Posterior vena cava (tissue), 2 donors: ENCODE measurements at regions of chr15 and their contacts with region 1.

Region 1: GRCh38 chr15:72252663-72253299 is 19.6 kb downstream of the PARP6 start:
- DNase-seq: no peak

Region 2: DNA sequence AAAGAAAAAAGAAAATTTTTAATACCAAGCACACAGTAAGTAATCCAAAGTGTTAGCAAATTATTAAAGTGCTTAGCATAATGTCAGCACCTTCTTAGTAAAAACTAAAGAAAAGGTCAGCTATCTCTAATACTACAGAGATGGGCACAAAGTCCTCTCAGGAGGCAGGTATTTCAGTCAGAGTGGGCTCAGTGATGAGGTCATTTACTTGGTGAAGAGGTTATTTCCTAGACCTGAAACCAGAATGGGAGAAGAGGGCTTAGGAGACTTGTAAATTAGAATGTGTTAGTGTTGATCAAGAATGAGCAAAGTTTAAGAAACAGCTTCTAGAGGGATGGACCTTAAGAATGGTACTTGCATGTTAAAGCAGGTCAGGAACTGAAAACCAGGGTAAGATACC is 13.1 kb before region 1 on chr15:
- intact Hi-C with region 1: loop called in 1 of 2 experiments (anchors 1 kb)
- DNase-seq: no peak

Region 3: GRCh38 chr15:72445426-72445825 is 192.6 kb after region 1 on chr15:
- intact Hi-C with region 1: no loop called
- DNase-seq: no peak

Region 4: GRCh38 chr15:72958634-72959033 is 705.9 kb after region 1 on chr15:
- intact Hi-C with region 1: loop called in 1 of 2 experiments (anchors 5 kb)
- DNase-seq: no peak

Region 5: DNA sequence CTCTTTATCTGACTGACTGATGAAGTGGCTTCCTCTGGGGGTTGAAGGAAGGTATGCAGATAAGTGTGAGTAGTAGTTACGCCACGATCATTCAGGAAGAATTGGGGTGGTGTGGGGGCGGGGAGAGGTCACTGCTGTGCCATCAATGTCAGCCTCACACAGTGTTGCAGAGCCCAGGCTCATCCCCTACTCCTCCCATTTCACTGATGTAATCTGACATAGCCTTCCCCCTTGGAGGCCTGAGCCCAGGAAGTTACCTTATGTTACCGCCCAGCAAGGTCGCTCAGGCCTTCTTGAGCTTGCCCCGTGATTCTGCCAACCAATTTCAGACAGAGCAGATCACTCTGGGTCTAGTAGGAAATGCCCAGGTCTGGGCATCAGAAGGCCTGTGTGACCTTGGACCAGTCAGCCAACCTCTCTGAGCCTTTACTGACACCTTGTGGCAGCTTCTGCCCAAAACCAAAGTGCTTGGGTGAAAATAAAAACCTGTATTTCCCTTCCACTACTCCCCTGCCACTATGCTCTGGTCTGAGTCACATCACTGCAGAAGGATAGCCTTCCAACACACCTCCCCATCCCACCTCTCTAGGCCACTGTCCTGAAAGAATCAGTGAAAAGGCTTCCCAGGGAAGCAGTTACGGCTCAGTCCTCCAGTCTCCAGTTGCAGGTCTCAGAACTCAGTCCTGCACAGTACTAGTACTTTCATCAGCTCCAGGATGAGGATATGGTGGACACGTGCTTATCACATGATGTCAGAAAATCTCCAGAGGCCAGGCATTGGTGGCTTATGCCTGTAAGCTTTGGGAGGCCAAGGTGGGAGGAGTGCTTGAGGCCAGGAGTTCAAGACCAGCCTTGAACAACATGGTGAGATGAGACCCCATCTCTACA is 1528.5 kb after region 1 on chr15:
- intact Hi-C with region 1: no loop called
- DNase-seq: peak; percentile 60